ENCODE measurements at regions of chr2 and their contacts with region 1.

Region 1: GRCh38 chr2:136423516-136423996 is 305.6 kb upstream of the CXCR4 start:
- DNase-seq: peak; percentile 57 to 87 (median 75)
- ATAC-seq: peak; percentile 95 to 98 (median 96)
- H3K4me3 ChIP-seq: peak overlapping the region; percentile 51 to 81
- H3K4me3 Mint-ChIP-seq: peak overlapping the region; percentile 81 to 87 (median 81)
- H3K27ac ChIP-seq: no peak overlapping the region
- H3K27ac Mint-ChIP-seq: peak overlapping the region; percentile 23 to 44
- H3K4me1 ChIP-seq: peaks cover 6 to 16% of the 10 kb centered on the region in 2 experiments
- H3K4me1 Mint-ChIP-seq: peaks cover 13 to 20% (median 14%) of the 10 kb centered on the region in 3 donors
- H3K27me3 ChIP-seq: peaks cover 4 to 15% of the 10 kb centered on the region in 2 experiments
- H3K27me3 Mint-ChIP-seq: peaks cover 29 to 42% of the 10 kb centered on the region in 2 donors

Region 2: GRCh38 chr2:135913727-135914365 is 509.7 kb before region 1 on chr2:
- CTCF ChIA-PET with region 1: interaction called in 1 of 2 experiments, 12 read pairs
- POLR2A ChIA-PET with region 1: interaction called in 1 of 2 experiments, 3 read pairs
- DNase-seq: peak in 19 of 35 experiments; percentile 14 to 83 (median 43)
- ATAC-seq: peak in 3 of 4 experiments; percentile 47 to 56 (median 49)
- H3K4me3 ChIP-seq: no peak overlapping the region
- H3K4me3 Mint-ChIP-seq: no peak overlapping the region
- H3K27ac ChIP-seq: no peak overlapping the region
- H3K27ac Mint-ChIP-seq: peak overlapping the region in 1 of 2 donors; percentile 52
- H3K4me1 ChIP-seq: no peaks in the 10 kb centered on the region
- H3K4me1 Mint-ChIP-seq: peaks cover 0 to 10% (median 10%) of the 10 kb centered on the region in 3 donors
- H3K27me3 ChIP-seq: no peaks in the 10 kb centered on the region
- H3K27me3 Mint-ChIP-seq: no peaks in the 10 kb centered on the region

Measured in T-cell (primary cell).